ENCODE measurements at regions of chr12 and their contacts with region 1.

Region 1: DNA sequence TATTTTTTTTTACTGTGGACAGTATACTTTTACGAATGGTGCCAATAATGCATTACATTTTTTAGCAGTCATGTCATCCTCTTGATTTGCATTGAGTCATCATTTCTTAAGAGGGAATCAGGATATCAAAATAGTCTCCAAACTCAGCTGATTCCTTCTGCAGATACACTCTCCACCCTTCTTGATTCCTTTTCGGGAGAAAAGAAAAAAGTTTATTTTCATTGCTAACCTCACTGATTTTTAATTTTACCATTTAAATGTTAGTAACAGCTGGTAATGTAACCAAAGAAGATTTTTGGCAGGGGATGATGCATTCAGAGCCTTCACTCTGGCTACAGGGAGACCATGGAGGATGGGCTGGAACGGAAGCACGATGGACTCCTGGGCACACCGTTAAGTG is 47.5 kb downstream of the MRPL42 start:
- DNase-seq: no peak
- ATAC-seq: no peak
- H3K4me3 ChIP-seq: no peak overlapping the region
- H3K27ac ChIP-seq: no peak overlapping the region
- H3K4me1 ChIP-seq: no peaks in the 10 kb centered on the region
- H3K27me3 ChIP-seq: no peaks in the 10 kb centered on the region
- CTCF ChIP-seq: no peak
- POLR2A ChIP-seq: no peak

Region 2: GRCh38 chr12:92759634-92760268 is 755.1 kb before region 1 on chr12:
- in situ Hi-C with region 1: no loop called
- intact Hi-C with region 1: no loop called
- DNase-seq: no peak
- ATAC-seq: no peak
- H3K4me3 ChIP-seq: no peak overlapping the region
- H3K27ac ChIP-seq: no peak overlapping the region
- H3K4me1 ChIP-seq: peaks cover 6 to 7% of the 10 kb centered on the region in 2 donors
- H3K27me3 ChIP-seq: no peaks in the 10 kb centered on the region
- CTCF ChIP-seq: no peak
- POLR2A ChIP-seq: no peak

Region 3: DNA sequence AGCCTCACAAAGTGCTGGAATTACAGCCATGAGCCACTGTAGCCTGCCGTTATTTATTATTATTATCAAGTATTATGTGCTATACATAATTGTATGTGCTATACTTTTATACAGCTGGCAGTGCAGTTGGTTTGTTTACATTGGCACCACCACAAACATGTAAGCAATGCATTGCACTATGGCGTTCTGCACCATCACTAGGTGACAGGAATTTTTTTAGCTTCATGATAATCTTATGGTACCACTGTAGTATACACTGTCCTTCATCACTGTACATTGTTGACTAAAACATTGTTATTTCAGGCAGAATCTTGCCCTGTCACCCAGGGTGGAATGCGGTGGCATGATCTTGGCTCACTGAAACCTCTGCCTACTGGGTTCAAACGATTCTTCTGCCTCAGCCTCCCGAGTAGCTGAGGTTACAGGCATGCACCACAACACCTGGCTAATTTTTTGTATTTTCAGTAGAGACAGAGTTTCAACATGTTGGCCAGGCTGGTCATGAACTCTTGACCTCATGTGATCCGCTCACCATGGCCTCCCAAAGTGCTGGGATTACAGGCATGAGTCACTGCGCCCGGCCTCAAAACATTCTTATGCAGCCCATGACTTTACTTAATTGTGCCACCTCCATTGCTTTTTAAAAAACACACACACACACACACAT is 30.4 kb before region 1 on chr12:
- in situ Hi-C with region 1: no loop called
- intact Hi-C with region 1: no loop called
- DNase-seq: peak in 1 of 2 donors; percentile 23
- ATAC-seq: no peak
- H3K4me3 ChIP-seq: no peak overlapping the region
- H3K27ac ChIP-seq: no peak overlapping the region
- H3K4me1 ChIP-seq: no peaks in the 10 kb centered on the region
- H3K27me3 ChIP-seq: no peaks in the 10 kb centered on the region
- CTCF ChIP-seq: no peak
- POLR2A ChIP-seq: no peak

Region 4: GRCh38 chr12:93563807-93564538 is 49.1 kb after region 1 on chr12:
- in situ Hi-C with region 1: loop called in 1 of 4 experiments (anchors 5 kb)
- intact Hi-C with region 1: no loop called
- DNase-seq: no peak
- ATAC-seq: no peak
- H3K4me3 ChIP-seq: no peak overlapping the region
- H3K27ac ChIP-seq: no peak overlapping the region
- H3K4me1 ChIP-seq: no peaks in the 10 kb centered on the region
- H3K27me3 ChIP-seq: no peaks in the 10 kb centered on the region
- CTCF ChIP-seq: no peak
- POLR2A ChIP-seq: no peak

Measured in gastrocnemius medialis (tissue), 4 donors.